HEK293T (cell line): ENCODE measurements at regions of chr19 and their contacts with region 1.

Region 1: DNA sequence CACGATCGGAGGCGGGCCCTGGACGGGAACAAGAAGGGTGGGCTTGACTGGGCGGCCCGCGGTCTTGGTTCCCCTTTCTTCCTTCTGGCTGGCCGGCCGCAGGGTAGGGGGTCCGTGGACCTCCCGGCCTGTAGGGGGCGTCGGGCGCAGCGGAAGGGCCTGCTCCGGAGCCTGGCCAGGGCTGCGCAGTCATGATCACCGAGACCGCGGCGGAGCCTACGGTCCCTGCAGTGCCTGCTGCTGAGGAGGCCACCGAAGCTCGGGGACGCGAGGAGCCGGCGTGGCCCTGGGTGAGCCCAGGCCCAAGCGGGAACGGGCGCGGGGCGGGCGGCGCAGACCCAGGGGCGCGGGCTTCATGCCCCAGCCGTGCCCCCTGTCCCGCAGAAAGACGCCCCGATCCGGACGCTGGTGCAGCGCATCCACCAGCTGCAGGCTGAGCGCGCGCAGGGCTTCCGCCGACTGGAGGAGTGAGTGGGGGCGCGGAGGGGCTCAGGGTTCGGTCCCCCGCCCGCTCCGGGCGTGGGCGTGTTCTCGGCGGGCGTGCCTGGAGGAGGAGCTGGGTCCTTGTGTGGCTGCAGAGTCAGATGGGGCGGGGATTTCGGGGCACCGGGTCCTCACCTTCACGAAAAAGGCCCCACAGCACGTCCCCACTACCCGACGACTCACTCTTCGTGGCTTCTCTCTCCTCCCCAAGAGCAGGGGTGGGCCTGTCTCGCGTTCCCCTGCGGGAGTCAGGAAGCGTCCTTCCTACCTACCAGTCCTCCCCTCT is at the start of gene REX1BD:
- DNase-seq: peak; percentile 77

Region 2: GRCh38 chr19:18571564-18572300 is 17.1 kb before region 1 on chr19 and contains the start of gene UBA52:
- CTCF ChIA-PET with region 1: interaction called, 16 read pairs
- POLR2A ChIA-PET with region 1: interaction called, 43 read pairs
- DNase-seq: peak; percentile 95